Heart right ventricle (tissue), 16 donors: ENCODE measurements at regions of chr2 and their contacts with region 1.

Region 1: GRCh38 chr2:43239981-43240761 is 13.8 kb upstream of the ZFP36L2 start:
- DNase-seq: no peak
- ATAC-seq: peak in 4 of 8 donors; percentile 27 to 40 (median 36)
- H3K4me3 ChIP-seq: no peak overlapping the region
- H3K27ac ChIP-seq: peak overlapping the region in 8 of 10 donors; percentile 23 to 92 (median 52)
- H3K4me1 ChIP-seq: peaks cover 0 to 54% (median 7%) of the 10 kb centered on the region in 9 donors
- H3K27me3 ChIP-seq: no peaks in the 10 kb centered on the region
- CTCF ChIP-seq: peak in 3 of 9 donors; percentile 14 to 21 (median 15)

Region 2: DNA sequence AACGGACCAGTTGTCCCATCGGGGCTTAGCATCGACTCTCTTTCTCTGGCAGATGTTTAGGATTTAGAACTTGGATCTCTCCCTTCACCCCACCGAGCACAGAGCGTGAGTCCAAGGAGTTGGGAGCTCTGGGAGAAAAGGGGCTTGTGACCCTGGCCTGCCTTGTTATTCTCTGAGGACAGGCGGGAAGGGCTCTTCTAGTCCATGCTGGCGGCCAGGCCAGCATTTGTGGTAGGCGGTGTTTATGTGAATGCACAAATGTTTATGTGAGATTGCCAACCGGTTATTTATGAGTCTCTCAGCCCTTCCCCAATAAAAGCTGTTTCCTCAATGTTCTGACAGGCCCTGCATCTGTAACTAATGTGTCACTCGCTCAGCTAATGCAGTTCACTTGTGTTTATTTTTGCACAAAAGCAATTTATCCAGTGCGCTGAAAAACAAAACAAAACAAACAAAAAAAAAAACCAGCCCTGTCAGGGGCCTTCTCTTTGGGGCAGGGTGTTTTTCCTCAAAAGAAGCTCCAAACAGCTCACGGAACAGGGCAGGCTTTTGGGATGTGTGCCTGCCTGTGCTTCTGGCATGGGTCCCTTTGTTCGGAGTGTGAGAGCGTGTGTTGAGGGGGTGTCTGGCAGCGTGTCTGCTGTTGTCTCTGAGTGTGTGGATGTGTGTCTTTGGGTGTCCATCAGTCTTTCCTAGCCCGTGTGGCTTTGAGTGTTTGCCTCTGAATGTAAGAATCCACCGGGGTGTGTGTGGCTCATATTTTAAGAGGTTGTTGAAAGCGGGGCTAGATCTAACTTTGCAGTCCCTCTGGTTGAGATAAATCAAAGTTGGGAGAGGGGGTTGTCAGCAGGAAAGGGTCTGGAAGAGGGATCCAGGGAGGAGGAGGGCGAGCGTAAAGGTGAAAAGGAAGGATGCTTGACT is 395.0 kb before region 1 on chr2:
- intact Hi-C with region 1: loop called in 3 of 10 experiments (anchors 10 kb)
- DNase-seq: no peak
- ATAC-seq: peak in 6 of 8 donors; percentile 12 to 60 (median 45)
- H3K4me3 ChIP-seq: no peak overlapping the region
- H3K27ac ChIP-seq: peak overlapping the region in 8 of 10 donors; percentile 4 to 71 (median 44)
- H3K4me1 ChIP-seq: peaks cover 0 to 29% (median 12%) of the 10 kb centered on the region in 9 donors
- H3K27me3 ChIP-seq: no peaks in the 10 kb centered on the region
- CTCF ChIP-seq: no peak

Region 3: DNA sequence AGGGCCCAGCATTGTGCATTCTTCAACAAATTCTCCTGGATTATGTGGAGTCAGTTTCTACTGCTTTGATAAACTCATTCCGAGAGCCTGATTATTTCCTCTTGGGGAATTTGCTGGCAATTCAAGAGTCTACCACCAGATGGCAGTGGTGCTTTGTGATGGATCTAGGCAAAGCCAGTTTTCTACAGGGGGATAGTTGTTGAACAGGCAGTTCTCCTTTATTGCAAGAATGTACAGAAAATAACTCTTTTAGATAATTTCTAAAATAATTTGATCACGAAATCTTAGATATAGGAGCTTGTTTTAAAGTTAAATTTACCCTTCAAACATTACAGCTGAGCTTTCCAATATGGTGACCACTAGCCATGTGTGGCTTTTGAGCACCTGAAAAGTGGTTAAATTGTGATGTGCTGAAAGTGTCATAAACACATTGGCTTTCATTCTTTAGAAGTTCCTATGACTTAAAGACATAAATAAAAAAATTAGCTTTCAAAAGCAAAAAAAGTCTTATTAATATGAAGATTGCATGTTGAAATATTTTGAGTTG is 381.1 kb before region 1 on chr2:
- intact Hi-C with region 1: loop called in 2 of 10 experiments (anchors 10 kb)
- DNase-seq: peak in 1 of 2 donors; percentile 81
- ATAC-seq: peak in 2 of 8 donors; percentile 30 to 38
- H3K4me3 ChIP-seq: no peak overlapping the region
- H3K27ac ChIP-seq: peak overlapping the region in 6 of 10 donors; percentile 3 to 76 (median 44)
- H3K4me1 ChIP-seq: peaks cover 2 to 30% (median 17%) of the 10 kb centered on the region in 9 donors
- H3K27me3 ChIP-seq: no peaks in the 10 kb centered on the region
- CTCF ChIP-seq: peak; percentile 80 to 93 (median 88)

Region 4: GRCh38 chr2:42974721-42975717 is 265.2 kb before region 1 on chr2:
- intact Hi-C with region 1: loop called in 1 of 10 experiments (anchors 10 kb)
- DNase-seq: peak; percentile 79 to 85
- ATAC-seq: peak; percentile 85 to 92 (median 88)
- H3K4me3 ChIP-seq: peak overlapping the region in 9 of 10 donors; percentile 16 to 61 (median 52)
- H3K27ac ChIP-seq: peak overlapping the region in 6 of 10 donors; percentile 59 to 81 (median 72)
- H3K4me1 ChIP-seq: peaks cover 12 to 32% (median 19%) of the 10 kb centered on the region in 9 donors
- H3K27me3 ChIP-seq: no peaks in the 10 kb centered on the region
- CTCF ChIP-seq: peak; percentile 86 to 97 (median 89)

Region 5: GRCh38 chr2:43184339-43184895 is 55.8 kb before region 1 on chr2:
- intact Hi-C with region 1: no loop called
- DNase-seq: no peak
- ATAC-seq: no peak
- H3K4me3 ChIP-seq: no peak overlapping the region
- H3K27ac ChIP-seq: peak overlapping the region in 1 of 10 donors; percentile 48
- H3K4me1 ChIP-seq: peaks cover 0 to 36% (median 3%) of the 10 kb centered on the region in 9 donors
- H3K27me3 ChIP-seq: no peaks in the 10 kb centered on the region
- CTCF ChIP-seq: no peak

Region 6: GRCh38 chr2:43333656-43334144 is 93.5 kb after region 1 on chr2:
- intact Hi-C with region 1: loop called in 1 of 10 experiments (anchors 10 kb)
- DNase-seq: peak in 1 of 2 donors; percentile 64
- ATAC-seq: peak; percentile 28 to 74 (median 67)
- H3K4me3 ChIP-seq: peak overlapping the region in 3 of 10 donors; percentile 19 to 23 (median 23)
- H3K27ac ChIP-seq: peak overlapping the region; percentile 57 to 90 (median 86)
- H3K4me1 ChIP-seq: peaks cover 13 to 72% (median 55%) of the 10 kb centered on the region in 9 donors
- H3K27me3 ChIP-seq: no peaks in the 10 kb centered on the region
- CTCF ChIP-seq: no peak

Region 7: DNA sequence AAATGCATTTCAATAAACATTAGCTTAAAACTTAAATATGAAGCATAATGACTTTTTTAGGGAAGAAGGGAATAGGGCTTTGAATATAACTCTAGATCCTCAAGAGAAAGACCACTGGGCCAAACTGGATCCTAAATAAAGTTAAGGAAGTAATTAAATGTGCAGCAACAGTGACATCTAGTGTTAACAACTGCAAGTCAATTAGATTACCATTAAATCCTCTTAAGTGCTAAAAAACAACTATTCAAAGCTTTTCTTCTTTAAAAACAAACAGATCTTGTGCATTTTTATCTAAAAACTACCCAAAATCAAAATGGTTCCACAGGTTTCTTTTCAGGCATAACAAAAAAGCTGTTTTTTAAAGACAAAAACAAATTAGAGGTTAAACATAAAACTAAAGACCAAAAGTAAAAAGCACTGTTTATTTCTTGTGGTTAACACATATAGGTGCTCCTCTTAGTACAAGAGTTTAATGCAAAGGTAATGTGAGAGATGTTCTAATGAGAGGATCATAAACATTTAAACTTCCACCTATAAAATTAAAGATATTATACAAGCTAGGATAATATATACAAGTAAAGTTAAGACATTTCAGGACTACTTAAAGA is 244.3 kb after region 1 on chr2:
- intact Hi-C with region 1: loop called in 2 of 10 experiments (anchors 10 kb)
- DNase-seq: peak in 1 of 2 donors; percentile 20
- ATAC-seq: peak in 6 of 8 donors; percentile 60 to 68 (median 64)
- H3K4me3 ChIP-seq: no peak overlapping the region
- H3K27ac ChIP-seq: peak overlapping the region in 5 of 10 donors; percentile 13 to 69 (median 65)
- H3K4me1 ChIP-seq: peaks cover 8 to 48% (median 29%) of the 10 kb centered on the region in 9 donors
- H3K27me3 ChIP-seq: no peaks in the 10 kb centered on the region
- CTCF ChIP-seq: peak; percentile 27 to 83 (median 71)

Region 8: GRCh38 chr2:43491065-43491639 is 251.0 kb after region 1 on chr2:
- intact Hi-C with region 1: loop called in 3 of 10 experiments (anchors 5 to 10 kb)
- DNase-seq: no peak
- ATAC-seq: no peak
- H3K4me3 ChIP-seq: no peak overlapping the region
- H3K27ac ChIP-seq: no peak overlapping the region
- H3K4me1 ChIP-seq: peaks cover 0 to 15% (median 4%) of the 10 kb centered on the region in 9 donors
- H3K27me3 ChIP-seq: no peaks in the 10 kb centered on the region
- CTCF ChIP-seq: no peak